ENCODE measurements at regions of chr3 and their contacts with region 1.

Region 1: DNA sequence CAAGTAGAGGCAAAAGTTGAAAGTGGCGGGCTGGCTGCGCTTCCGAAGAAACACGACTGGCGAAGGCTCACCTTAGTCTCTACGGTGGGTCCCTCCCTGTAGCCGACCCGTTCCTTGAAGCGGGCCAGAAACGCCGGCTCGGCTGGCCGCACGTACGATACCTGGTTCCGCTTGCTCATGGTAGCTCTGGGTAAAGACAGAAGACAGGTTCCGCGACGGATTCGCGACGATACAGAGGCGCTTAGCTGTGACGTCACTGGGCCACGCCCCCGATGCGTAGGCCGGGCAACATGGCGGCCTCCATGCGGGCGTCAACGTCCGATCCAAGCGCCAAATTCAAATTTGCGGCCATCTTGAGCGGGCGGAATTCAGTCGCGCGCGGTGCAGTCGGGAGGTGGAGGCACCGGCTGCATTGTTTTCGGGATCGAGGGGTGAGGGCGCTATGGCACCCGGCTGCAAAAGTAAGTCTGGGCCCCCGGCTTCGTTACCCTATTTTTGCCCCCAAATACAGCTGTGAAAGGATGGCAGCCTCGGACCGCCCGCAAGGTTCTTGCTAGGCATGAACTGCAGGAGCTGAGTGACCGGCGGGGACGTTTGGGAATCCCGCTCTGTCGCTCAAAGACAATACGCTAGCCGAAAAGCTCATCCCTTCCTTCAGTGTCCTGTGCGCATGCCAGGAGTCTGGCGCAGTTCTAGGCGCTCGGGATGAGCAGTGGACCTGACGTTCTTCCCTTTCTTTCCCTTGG is at the starts of genes KIAA1143 and KIF15:
- DNase-seq: peak; percentile 98
- H3K4me3 Mint-ChIP-seq: peak within 1 kb of the TSS; percentile 90
- H3K27ac Mint-ChIP-seq: peak within 1 kb of the TSS; percentile 86
- H3K4me1 Mint-ChIP-seq: peaks cover 39% of the 10 kb centered on the region
- H3K27me3 Mint-ChIP-seq: no peaks in the 10 kb centered on the region
- total RNA-seq, gene KIAA1143: 31.3 to 35.9 TPM
- total RNA-seq, gene KIF15: 52.5 to 53.2 TPM

Region 2: DNA sequence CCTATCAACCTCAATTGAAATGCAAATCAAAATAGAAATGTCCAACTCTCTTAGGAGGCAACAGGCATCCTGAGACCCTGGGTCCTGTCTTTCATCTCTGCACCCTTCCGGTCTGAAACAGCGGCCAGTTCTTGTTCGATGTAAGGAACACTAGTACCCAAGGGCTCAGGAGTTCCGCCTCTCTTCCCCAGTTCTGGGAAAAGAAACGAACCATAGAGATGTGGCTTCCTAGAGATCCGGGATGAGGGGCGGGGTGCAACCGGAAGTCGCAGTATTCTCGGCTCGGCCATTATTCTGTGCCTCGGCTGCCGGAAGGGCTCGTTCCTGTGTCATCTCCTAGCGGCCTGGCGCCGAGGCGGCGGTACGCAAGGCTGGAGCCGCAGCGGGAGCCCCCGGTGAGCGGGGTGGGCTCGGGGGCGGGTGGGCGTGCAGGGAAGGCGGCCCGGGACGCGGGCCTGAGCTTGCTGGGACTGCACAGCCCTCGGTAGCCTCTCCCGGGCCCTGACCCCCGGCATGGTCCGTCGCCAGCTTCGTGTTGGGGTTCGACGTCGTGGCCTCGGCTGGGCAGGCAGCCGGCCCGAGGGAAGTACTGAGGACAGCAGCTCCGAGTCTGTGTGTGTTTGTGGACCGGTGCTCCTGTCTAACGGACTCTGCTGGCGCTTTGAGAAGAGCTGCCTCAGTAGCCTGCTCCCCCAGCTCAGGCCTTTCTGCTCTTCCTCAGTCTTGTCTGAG is 136.7 kb before region 1 on chr3 and contains the start of gene ZNF197:
- CTCF ChIA-PET with region 1: no interaction called
- POLR2A ChIA-PET with region 1: interaction called, 30 read pairs
- DNase-seq: peak; percentile 71
- H3K4me3 Mint-ChIP-seq: peak within 1 kb of the TSS; percentile 86
- H3K27ac Mint-ChIP-seq: peak within 1 kb of the TSS; percentile 81
- H3K4me1 Mint-ChIP-seq: peaks cover 19% of the 10 kb centered on the region
- H3K27me3 Mint-ChIP-seq: no peaks in the 10 kb centered on the region
- total RNA-seq, gene ZNF197: 13.4 to 14.0 TPM

Region 3: GRCh38 chr3:44712455-44713075 is 49.0 kb before region 1 on chr3 and contains the start of gene ZNF502:
- CTCF ChIA-PET with region 1: no interaction called
- POLR2A ChIA-PET with region 1: interaction called, 12 read pairs
- DNase-seq: peak; percentile 37
- H3K4me3 Mint-ChIP-seq: peak within 1 kb of the TSS; percentile 71
- H3K27ac Mint-ChIP-seq: no peak within 1 kb of the TSS
- H3K4me1 Mint-ChIP-seq: peaks cover 9% of the 10 kb centered on the region
- H3K27me3 Mint-ChIP-seq: no peaks in the 10 kb centered on the region
- total RNA-seq, gene ZNF502: 0.86 to 0.95 TPM

Region 4: DNA sequence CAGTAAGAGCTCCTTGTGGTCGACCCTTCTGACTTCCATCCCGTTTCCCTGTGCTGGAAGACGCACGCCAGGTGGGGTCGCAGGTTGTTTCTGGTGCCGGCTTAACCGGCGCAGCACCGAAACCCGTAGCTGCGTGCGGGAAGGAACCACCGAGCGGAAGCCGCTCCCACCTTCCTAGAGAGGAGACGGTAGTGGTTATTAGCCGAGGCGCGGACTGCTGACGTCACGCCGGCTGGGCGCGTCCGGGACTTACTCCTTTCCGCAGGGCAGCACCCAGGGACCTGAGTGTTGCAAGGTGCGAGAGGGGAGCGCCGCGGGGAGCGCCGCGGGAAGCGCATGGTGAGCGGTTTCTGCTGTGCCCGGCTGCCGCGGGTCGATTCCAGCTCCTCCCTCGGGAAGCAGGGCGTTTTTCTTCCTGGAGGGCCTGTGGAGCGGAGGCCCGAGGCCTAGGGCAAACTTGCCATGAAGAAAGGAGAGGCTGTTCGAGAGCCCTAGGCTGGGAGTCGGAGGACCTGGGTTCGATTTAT is 32.1 kb before region 1 on chr3 and contains the start of gene ZNF501:
- CTCF ChIA-PET with region 1: interaction called, 7 read pairs
- POLR2A ChIA-PET with region 1: interaction called, 36 read pairs
- DNase-seq: peak; percentile 88
- H3K4me3 Mint-ChIP-seq: peak within 1 kb of the TSS; percentile 83
- H3K27ac Mint-ChIP-seq: peak within 1 kb of the TSS; percentile 62
- H3K4me1 Mint-ChIP-seq: peaks cover 17% of the 10 kb centered on the region
- H3K27me3 Mint-ChIP-seq: no peaks in the 10 kb centered on the region
- total RNA-seq, gene ZNF501: 2.0 to 2.5 TPM

Measured in activated CD4-positive, alpha-beta memory T cell treated with anti-CD3 and anti-CD28 coated beads, Interleukin-2, amount 10 ng/mL, durations not matched to agents 7 days and 5 days (primary cell).